ENCODE measurements at regions of chr1 and their contacts with region 1.

Region 1: DNA sequence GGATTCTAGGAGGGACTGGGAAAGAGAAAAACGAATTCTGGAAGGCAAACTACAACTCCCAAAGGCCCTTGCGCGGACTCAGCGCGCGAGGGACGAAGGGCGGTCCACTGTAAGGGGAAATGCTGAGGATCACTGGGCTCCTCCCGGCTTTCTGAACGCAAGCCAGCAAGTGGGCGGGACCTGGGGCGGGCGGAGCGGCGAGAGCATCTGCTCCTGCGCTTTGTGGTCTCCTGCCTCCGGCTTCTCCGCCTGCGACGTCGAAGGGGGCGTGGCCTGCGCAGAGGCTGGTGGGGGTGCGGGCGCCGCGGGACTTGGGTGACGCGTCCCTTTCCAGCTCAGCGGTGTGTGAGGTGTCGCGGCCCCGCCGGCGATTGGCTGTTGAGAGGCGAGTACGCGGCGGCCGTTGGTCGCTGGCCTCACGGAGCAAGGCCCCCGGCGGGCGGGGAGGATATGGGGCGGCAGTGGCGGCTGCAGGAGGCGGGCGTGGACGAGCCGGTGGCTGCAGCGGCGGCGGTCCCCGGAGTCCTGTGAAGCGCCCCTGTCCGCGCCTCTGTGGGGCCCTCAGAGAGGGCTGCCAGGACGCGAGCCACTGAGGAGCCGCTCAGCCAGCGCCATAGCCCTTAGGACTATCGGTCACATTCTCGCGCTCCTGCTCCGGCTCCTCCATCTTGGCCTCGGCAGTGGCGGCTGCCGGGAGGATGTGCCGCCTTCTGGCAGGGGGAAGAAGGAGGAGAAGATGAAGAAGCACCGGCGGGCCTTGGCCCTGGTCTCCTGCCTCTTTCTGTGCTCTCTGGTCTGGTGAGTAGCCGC is at the start of gene SUCO:
- DNase-seq: peak; percentile 100
- H3K4me3 Mint-ChIP-seq: peak within 1 kb of the TSS; percentile 89
- H3K27ac Mint-ChIP-seq: peak within 1 kb of the TSS; percentile 97
- H3K4me1 Mint-ChIP-seq: peaks cover 38% of the 10 kb centered on the region
- H3K27me3 Mint-ChIP-seq: peaks cover 17% of the 10 kb centered on the region
- total RNA-seq, gene SUCO: 37.2 and 38.0 TPM in 2 replicates

Region 2: DNA sequence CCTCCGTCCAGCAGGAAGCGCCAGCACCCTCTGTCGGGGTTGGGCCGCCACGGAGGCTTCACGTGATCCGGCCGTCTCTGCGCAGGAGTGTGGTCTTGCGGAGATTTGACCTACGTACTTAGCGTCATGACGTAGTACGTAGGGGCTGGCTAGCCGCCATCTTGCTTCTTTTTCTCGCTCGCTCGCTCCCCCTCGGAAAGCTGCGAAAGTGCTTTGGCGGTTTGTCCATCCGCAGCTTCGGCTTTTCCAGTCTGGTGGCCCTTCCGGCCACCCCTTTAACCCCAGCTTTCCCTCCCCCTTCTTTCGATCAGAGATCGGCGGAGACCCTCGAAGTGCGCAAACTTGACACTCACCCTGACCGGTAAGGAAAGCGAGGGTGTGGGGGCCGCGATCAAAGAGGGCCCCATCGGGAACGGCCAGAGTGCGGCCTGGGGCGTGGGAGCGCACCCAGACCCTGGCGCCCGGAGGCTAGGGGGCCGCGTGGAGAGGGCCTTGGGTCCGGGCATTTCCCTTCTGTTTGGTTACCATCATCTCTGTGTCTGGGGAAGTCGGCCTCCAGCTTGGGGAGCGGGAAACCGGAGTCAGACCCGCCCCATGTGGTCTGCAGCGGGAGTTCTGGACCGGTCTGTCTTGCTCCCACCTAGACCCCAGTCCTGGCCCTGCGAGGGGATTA is 1047.4 kb before region 1 on chr1 and contains the start of gene PRRC2C:
- intact Hi-C with region 1: loop called (anchors 5 kb)
- DNase-seq: peak; percentile 98
- H3K4me3 Mint-ChIP-seq: peak within 1 kb of the TSS; percentile 94
- H3K27ac Mint-ChIP-seq: peak within 1 kb of the TSS; percentile 99
- H3K4me1 Mint-ChIP-seq: peaks cover 40% of the 10 kb centered on the region
- H3K27me3 Mint-ChIP-seq: no peaks in the 10 kb centered on the region
- total RNA-seq, gene PRRC2C: 278 TPM in 2 replicates

Region 3: GRCh38 chr1:172278478-172278877 is 254.4 kb before region 1 on chr1:
- intact Hi-C with region 1: loop called (anchors 10 kb)
- DNase-seq: no peak
- H3K4me3 Mint-ChIP-seq: no peak overlapping the region
- H3K27ac Mint-ChIP-seq: no peak overlapping the region
- H3K4me1 Mint-ChIP-seq: peaks cover 14% of the 10 kb centered on the region
- H3K27me3 Mint-ChIP-seq: no peaks in the 10 kb centered on the region

Region 4: DNA sequence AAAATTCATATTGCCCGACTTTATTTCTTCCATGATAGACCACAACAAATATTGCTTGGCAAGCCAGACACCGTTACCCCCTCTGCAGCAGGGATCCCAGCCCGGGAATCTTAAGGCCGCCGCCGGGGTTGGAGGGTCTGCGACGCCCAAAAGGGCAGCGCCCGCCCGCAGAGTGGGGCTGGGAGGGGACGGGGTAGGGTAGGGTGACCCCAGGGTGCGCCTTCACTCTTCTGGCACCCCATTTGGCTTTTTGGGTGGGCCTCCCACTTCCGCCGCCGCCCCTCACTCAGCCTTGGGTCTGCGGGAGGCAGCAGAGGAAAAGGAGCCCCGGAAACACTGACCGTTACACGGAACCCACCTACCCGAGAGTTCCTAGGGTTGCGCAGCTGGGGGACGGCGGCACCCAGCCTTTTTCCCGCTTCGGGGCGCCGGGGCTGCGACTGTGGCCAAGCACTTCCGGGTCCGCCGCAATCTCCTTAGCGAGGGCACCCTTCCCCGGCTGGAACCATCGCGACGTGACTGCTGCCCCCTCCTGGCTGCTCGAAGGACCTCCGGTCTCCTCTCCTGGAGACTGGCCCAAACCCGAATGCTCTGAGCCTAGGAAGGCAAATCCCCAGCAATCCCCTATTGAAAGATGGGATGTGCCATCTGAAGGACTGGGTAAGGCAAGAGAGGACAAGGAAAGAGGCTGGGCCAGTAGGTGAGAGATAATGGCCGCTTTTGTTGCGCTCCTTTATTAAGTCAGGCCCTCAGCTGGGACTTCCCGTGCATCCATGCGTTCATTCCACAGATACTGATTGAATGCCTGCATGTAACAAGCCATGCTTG is 89.1 kb before region 1 on chr1 and contains the start of gene PIGC:
- intact Hi-C with region 1: loop called (anchors 1 kb)
- DNase-seq: peak; percentile 97
- H3K4me3 Mint-ChIP-seq: peak within 1 kb of the TSS; percentile 91
- H3K27ac Mint-ChIP-seq: peak within 1 kb of the TSS; percentile 88
- H3K4me1 Mint-ChIP-seq: peaks cover 27% of the 10 kb centered on the region
- H3K27me3 Mint-ChIP-seq: no peaks in the 10 kb centered on the region
- total RNA-seq, gene PIGC: 20.4 and 23.9 TPM in 2 replicates

Region 5: GRCh38 chr1:172497230-172497629 is 35.7 kb before region 1 on chr1:
- intact Hi-C with region 1: no loop called
- DNase-seq: no peak
- H3K4me3 Mint-ChIP-seq: no peak overlapping the region
- H3K27ac Mint-ChIP-seq: no peak overlapping the region
- H3K4me1 Mint-ChIP-seq: no peaks in the 10 kb centered on the region
- H3K27me3 Mint-ChIP-seq: peaks cover 6% of the 10 kb centered on the region

Region 6: DNA sequence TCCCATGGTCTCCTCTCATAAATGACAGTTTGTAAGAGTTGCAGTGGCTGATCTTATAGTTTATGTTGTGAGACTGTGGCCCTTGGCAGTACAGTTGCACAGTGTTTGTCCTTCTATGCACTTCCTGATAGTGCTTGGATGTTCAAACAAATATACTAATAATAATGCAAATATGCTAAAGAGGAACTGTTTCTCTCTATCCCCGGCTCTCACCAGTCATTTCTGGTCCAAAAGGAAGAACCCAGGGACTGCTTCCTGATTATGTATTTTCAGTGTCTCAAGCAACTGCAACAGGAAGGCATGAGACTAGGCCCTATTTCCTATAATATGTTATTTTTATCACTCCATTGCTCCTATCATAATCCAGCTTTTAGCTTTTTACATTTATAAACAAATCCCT is 17.0 kb before region 1 on chr1:
- intact Hi-C with region 1: no loop called
- DNase-seq: no peak
- H3K4me3 Mint-ChIP-seq: no peak overlapping the region
- H3K27ac Mint-ChIP-seq: no peak overlapping the region
- H3K4me1 Mint-ChIP-seq: no peaks in the 10 kb centered on the region
- H3K27me3 Mint-ChIP-seq: peaks cover 14% of the 10 kb centered on the region

Region 7: GRCh38 chr1:172638885-172639831 is 106.3 kb after region 1 on chr1:
- intact Hi-C with region 1: loop called (anchors 1 kb)
- DNase-seq: peak; percentile 92
- H3K4me3 Mint-ChIP-seq: peak overlapping the region; percentile 77
- H3K27ac Mint-ChIP-seq: peak overlapping the region; percentile 100
- H3K4me1 Mint-ChIP-seq: peaks cover 74% of the 10 kb centered on the region
- H3K27me3 Mint-ChIP-seq: peaks cover 3% of the 10 kb centered on the region

Region 8: DNA sequence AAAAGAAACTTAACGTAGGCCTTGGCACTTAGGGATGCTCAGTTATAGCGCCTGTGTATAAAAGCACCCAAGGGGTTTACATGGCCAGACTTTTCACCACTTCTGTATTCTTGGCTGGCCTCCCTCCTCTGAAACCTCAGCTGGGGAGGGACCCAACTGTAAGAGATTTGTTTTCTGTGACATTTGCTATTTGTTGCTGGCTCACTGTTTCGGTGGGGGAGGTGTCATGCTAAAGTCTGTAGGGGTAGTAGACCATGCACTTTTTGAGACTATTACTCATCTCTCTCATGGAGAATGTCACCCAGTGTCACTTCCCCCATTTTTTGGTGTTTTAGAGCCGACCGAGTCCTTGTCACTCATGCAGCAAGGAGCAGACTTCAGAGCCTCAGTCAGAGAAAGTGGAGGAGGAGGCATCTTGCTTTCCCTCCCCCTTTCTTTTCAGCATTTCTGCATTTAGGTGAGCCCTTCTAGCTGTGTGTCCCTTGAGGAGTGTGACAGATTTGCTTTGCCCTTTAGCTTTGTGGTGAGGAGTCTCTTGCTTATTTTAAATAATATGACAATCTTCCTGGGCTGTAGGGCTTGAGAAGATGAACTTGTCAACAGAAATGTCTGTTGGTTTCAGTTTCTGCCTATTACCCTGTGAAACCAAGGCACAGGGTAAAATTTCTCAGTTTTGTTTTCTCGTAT is 286.1 kb after region 1 on chr1:
- intact Hi-C with region 1: loop called (anchors 5 kb)
- DNase-seq: peak; percentile 80
- H3K4me3 Mint-ChIP-seq: peak overlapping the region; percentile 77
- H3K27ac Mint-ChIP-seq: peak overlapping the region; percentile 82
- H3K4me1 Mint-ChIP-seq: peaks cover 41% of the 10 kb centered on the region
- H3K27me3 Mint-ChIP-seq: peaks cover 14% of the 10 kb centered on the region

Region 9: DNA sequence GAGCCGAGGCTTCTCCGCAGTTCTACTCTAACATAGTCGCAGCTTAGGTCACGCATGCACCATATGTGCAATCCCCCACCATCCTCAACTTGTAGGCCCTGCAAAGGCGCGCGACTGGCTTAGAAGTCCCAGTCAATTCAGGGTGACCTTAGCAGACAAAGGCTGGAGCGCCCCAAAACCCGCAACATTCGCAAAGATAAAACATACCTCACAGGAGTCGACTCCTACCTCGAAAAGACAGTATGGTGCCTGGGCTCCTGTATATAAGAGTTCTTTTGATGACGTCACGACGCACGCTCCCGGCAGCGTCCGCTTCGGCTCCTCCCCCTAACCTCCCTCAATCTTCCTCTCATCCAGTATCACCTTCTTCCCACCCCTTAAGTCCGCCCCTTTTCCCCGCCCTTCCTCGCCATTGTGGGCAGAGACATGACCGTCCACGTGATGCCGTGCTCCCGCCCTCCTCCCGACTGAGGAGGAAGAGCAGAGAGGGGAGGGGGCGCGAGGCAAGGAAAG is 1334.9 kb after region 1 on chr1 and contains the start of gene GAS5:
- intact Hi-C with region 1: loop called (anchors 1 kb)
- DNase-seq: peak; percentile 100
- H3K4me3 Mint-ChIP-seq: peak within 1 kb of the TSS; percentile 92
- H3K27ac Mint-ChIP-seq: peak within 1 kb of the TSS; percentile 99
- H3K4me1 Mint-ChIP-seq: peaks cover 57% of the 10 kb centered on the region
- H3K27me3 Mint-ChIP-seq: no peaks in the 10 kb centered on the region
- total RNA-seq, gene GAS5: 695 and 703 TPM in 2 replicates

Measured in activated CD4-positive, alpha-beta T cell treated with anti-CD3 and anti-CD28 coated beads, Interleukin-2, amount 10 ng/mL, durations not matched to agents 24 days and 14 days (primary cell).